ENCODE measurements at regions of chr11 and their contacts with region 1.

Region 1: DNA sequence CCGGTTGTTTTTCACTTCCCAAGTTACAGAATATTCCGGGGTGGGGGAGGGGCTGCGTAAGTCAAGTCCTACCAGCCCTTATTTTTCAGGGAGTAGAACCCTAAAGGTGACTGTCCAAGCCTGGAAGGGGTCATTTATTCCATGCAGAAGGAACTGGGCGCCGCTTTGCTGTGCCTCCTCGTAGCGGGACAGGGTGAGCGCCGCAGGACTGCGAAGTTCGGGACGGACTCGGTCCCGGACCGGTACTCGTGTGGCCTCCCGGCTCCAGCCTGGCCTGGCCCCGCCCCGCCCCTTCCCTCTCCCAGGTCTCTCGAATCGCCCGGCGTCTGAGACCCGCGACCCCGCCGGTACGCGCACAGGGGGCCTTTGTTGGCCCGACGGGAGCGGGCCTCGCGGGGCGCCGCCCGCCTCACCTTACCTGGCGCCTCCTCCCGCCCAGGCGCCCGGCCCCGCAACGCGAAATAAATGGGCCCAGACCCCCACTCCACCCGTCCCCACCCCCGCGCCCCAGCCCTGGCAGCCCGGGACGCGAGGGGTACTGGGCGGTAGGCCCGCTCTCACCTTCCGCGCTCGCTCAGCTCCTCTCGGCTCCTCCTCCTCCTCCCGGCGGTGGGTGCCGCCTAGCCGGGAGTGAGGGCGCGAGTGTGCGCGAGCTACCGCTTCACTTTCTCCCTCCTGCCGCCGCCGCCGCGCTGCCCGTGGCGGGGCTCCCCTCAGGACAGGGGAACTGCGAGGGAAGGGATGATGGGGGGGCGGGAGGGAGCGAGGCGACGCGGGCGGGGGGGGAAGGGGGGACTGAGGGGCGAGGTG is 698 bp downstream of the PAK1 start:
- DNase-seq: peak; percentile 68
- CTCF ChIP-seq: no peak

Region 2: DNA sequence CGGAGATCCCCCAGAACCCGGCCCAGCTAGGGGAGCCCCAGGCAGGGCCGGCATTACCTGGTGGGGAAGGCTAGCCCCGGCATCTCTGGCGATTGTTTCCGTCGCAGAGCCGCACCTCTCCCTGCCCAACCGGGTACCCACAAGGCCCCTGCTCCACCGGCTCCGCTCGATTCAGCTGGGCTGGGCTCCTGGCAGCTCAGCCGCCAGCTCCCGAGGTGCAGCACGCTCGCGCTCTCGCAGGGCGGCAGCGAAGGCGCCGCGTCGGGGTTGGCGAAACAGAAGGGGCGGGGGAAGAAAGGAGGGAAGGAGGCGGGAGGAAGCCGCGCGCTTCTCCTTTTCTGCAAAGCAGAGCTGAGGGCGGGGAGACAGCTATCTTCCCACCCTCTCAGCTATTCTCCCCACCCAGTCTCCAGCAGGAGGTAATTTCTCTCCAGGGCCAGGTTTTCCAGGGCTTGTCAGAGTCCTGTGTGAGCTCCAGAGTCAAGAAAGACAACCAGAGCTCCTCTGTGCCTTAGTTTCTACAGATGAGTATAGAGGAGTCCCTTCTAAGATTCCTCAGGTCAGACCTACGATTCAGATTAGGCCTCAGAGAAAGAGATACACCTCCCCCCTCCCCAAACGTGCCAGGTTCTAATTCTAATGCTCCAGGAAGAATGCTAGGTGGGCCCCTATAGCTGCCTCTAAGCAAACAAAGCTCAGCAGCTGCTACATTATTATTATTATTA is 61.3 kb before region 1 on chr11:
- CTCF ChIA-PET with region 1: interaction called, 14 read pairs
- POLR2A ChIA-PET with region 1: no interaction called
- DNase-seq: peak; percentile 83
- CTCF ChIP-seq: peak; percentile 32

Region 3: GRCh38 chr11:77435972-77436371 is 37.2 kb before region 1 on chr11:
- CTCF ChIA-PET with region 1: interaction called, 13 read pairs
- POLR2A ChIA-PET with region 1: interaction called, 3 read pairs
- DNase-seq: no peak
- CTCF ChIP-seq: no peak

Region 4: GRCh38 chr11:77449060-77449521 is 24.1 kb before region 1 on chr11:
- CTCF ChIA-PET with region 1: interaction called, 28 read pairs
- POLR2A ChIA-PET with region 1: no interaction called
- DNase-seq: peak; percentile 44
- CTCF ChIP-seq: no peak

Region 5: DNA sequence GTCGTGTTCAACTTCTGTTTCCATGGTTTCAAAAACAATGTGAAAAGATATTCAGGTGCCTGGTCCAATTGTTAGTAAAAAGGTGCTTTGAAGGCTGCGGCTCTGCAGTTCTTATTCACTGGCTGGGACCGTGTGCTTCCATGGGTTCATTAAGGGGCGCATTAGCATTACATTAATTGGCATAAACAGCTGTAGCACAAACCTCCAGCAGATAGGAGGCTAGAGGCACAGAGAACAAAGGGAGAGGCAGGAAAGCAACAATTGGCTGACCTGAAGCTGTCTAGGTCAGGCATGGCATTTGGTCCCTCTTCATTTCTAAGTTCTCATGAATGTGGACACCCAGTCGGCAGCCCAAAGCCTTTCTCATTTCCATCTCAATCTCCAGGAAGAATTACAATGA is 15.9 kb before region 1 on chr11:
- CTCF ChIA-PET with region 1: interaction called, 28 read pairs
- POLR2A ChIA-PET with region 1: no interaction called
- DNase-seq: no peak
- CTCF ChIP-seq: no peak

Region 6: GRCh38 chr11:77647654-77648305 is 174.6 kb after region 1 on chr11:
- CTCF ChIA-PET with region 1: no interaction called
- POLR2A ChIA-PET with region 1: no interaction called
- DNase-seq: no peak
- CTCF ChIP-seq: no peak